ENCODE measurements at regions of chr16 and their contacts with region 1.

Region 1: GRCh38 chr16:76345163-76345661 is 68.0 kb downstream of the CNTNAP4 start:
- DNase-seq: no peak
- H3K27ac ChIP-seq: no peak overlapping the region
- CTCF ChIP-seq: no peak

Region 2: GRCh38 chr16:76389126-76389525 is 43.9 kb after region 1 on chr16:
- CTCF ChIA-PET with region 1: interaction called, 13 read pairs
- POLR2A ChIA-PET with region 1: no interaction called
- DNase-seq: no peak
- H3K27ac ChIP-seq: no peak overlapping the region
- CTCF ChIP-seq: no peak

Region 3: DNA sequence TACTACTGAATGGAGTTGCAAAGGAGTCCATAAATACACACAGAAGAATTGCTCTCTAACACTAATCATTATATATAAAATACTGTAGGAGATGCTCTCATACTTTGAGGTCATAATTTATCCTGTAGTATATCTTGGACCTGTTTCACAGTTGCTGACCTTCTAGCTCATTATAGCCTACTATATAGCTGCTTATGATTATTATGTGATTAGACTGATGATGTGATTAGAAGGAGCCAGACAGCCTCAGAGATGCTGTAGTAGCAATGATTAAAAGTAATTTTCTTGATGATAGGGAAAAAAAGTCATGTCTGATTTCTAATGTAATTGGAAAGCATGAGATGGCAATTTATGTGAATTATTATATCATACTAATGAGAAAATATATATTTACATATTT is 387.7 kb after region 1 on chr16:
- CTCF ChIA-PET with region 1: interaction called, 12 read pairs
- POLR2A ChIA-PET with region 1: no interaction called
- DNase-seq: no peak
- H3K27ac ChIP-seq: no peak overlapping the region
- CTCF ChIP-seq: no peak

Measured in RWPE1 (cell line).